Testis (tissue), 5 donors: ENCODE measurements at regions of chrX and their contacts with region 1.

Region 1: GRCh38 chrX:119067023-119067739 is 5.6 kb upstream of the CT47C1 start:
- DNase-seq: peak; percentile 67
- H3K4me3 ChIP-seq: no peak overlapping the region
- H3K27ac ChIP-seq: no peak overlapping the region
- H3K4me1 ChIP-seq: no peaks in the 10 kb centered on the region
- H3K27me3 ChIP-seq: no peaks in the 10 kb centered on the region
- CTCF ChIP-seq: peak; percentile 29 to 59 (median 57)
- POLR2A ChIP-seq: no peak

Region 2: DNA sequence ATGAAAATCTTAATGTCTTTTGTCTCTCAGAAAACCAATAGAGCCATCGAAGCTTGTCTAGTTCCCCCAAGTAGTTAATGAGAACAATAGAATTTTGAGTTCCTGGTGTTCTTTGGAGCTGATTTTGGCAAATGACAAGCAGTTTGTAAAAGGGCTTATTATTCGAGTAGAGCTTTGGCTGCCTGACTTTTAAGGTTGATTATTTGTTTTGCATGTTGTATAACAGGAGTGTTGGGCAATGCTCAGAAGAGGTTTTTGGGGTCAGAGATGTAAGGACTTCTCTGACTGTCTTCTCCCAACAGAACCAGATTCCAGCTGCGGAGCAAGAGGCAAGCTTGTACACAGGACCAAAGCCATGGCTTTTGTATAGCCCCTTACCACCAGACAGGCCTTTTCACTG is 213.6 kb before region 1 on chrX:
- intact Hi-C with region 1: loop called (anchors 10 kb)
- DNase-seq: no peak
- H3K4me3 ChIP-seq: no peak overlapping the region
- H3K27ac ChIP-seq: no peak overlapping the region
- H3K4me1 ChIP-seq: no peaks in the 10 kb centered on the region
- H3K27me3 ChIP-seq: no peaks in the 10 kb centered on the region
- CTCF ChIP-seq: no peak
- POLR2A ChIP-seq: no peak

Region 3: GRCh38 chrX:119004920-119005524 is 62.2 kb before region 1 on chrX:
- intact Hi-C with region 1: loop called (anchors 5 kb)
- DNase-seq: peak; percentile 70
- H3K4me3 ChIP-seq: no peak overlapping the region
- H3K27ac ChIP-seq: no peak overlapping the region
- H3K4me1 ChIP-seq: no peaks in the 10 kb centered on the region
- H3K27me3 ChIP-seq: no peaks in the 10 kb centered on the region
- CTCF ChIP-seq: peak; percentile 14 to 63 (median 47)
- POLR2A ChIP-seq: no peak